Naive thymus-derived CD4-positive, alpha-beta T cell (primary cell): ENCODE measurements at regions of chr1 and their contacts with region 1.

Region 1: DNA sequence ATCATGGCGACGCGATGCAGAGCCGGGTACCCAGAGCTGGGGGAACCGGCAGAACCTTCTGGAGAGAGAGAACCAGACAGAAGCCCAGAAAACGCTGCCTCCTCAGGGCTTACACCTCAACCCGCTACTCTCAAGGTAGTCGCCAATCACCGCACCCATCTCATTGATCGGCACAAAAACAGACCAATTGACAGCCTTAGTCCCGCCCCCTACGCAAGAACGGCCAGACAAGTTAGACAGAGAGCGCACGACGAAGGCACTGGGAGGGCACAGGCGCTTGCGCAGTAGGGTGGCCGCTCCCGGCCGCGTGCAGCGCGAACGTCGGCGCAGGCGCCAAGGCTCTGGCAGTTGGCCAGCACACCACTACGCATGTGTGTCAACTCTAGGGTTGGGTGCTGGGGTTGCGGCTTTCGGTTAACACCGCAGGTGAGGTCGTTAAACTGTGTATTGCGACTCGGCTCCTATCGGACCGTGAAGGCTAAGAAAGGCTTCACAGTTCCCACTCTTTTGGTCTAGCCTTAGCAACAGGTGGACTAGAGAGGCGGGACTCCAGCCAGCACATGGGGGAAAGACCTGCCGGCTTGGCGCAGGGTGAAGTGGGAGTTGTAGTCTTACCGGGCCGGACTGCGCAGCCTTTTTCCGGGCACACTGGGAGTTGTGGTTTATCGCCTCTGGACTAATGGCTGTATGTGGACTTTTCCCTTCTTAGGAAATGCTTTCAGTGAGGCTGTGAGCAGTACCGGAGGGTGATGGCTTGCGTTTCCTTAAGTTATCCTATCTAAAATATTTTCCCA is at the starts of genes CCT3 and TSACC:
- DNase-seq: peak; percentile 99 to 100 (median 100)
- ATAC-seq: peak; percentile 97
- H3K4me3 ChIP-seq: peak within 1 kb of the TSS; percentile 83
- H3K4me3 Mint-ChIP-seq: peak within 1 kb of the TSS; percentile 97 to 99 (median 99)
- H3K27ac ChIP-seq: peak within 1 kb of the TSS; percentile 76
- H3K27ac Mint-ChIP-seq: peak within 1 kb of the TSS; percentile 97 to 99 (median 98)
- H3K4me1 ChIP-seq: peaks cover 11 to 17% of the 10 kb centered on the region in 2 donors
- H3K4me1 Mint-ChIP-seq: peaks cover 16 to 49% (median 40%) of the 10 kb centered on the region in 7 donors
- H3K27me3 ChIP-seq: no peaks in the 10 kb centered on the region
- H3K27me3 Mint-ChIP-seq: peaks cover 0 to 12% (median 0%) of the 10 kb centered on the region in 5 donors
- total RNA-seq, gene CCT3: 78.0 to 282 (median 114) TPM
- total RNA-seq, gene TSACC: 1.1 TPM in 1 of 5 experiments, not detected in the others

Region 2: GRCh38 chr1:155934097-155934935 is 404.1 kb before region 1 on chr1 and contains the start of gene KHDC4:
- CTCF ChIA-PET with region 1: no interaction called
- POLR2A ChIA-PET with region 1: no interaction called
- intact Hi-C with region 1: loop called in 1 of 2 experiments (anchors 5 kb)
- DNase-seq: peak; percentile 79 to 98 (median 97)
- ATAC-seq: peak; percentile 97
- H3K4me3 ChIP-seq: peak within 1 kb of the TSS; percentile 87
- H3K4me3 Mint-ChIP-seq: no peak within 1 kb of the TSS
- H3K27ac ChIP-seq: peak within 1 kb of the TSS; percentile 89
- H3K27ac Mint-ChIP-seq: peak within 1 kb of the TSS in 1 of 9 donors; percentile 22
- H3K4me1 ChIP-seq: peaks cover 40 to 42% of the 10 kb centered on the region in 2 donors
- H3K4me1 Mint-ChIP-seq: peaks cover 15 to 42% (median 37%) of the 10 kb centered on the region in 7 donors
- H3K27me3 ChIP-seq: no peaks in the 10 kb centered on the region
- H3K27me3 Mint-ChIP-seq: no peaks in the 10 kb centered on the region
- total RNA-seq, gene KHDC4: 64.6 to 117 (median 79.8) TPM

Region 3: DNA sequence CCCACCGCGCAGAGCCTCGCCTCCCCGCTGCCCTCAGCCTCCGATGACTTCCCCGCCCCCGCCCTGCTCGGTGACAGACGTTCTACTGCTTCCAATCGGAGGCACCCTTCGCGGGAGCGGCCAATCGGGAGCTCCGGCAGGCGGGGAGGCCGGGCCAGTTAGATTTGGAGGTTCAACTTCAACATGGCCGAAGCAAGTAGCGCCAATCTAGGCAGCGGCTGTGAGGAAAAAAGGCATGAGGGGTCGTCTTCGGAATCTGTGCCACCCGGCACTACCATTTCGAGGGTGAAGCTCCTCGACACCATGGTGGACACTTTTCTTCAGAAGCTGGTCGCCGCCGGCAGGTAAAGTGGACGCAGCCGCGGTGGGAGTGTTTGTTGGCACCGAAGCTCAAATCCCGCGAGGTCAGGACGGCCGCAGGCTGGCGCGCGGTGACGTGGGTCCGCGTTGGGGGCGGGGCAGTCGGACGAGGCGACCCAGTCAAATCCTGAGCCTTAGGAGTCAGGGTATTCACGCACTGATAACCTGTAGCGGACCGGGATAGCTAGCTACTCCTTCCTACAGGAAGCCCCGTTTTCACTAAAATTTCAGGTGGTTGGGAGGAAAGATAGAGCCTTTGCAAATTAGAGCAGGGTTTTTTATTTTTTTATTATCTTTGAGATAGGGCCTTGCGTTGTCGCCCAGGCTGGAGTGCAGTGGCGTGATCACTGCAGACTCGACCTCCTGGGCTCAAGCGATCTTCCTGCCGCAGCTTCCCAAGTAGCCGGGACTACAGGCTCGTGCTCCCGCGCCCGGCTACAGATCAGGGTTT is 125.3 kb before region 1 on chr1 and contains the start of gene PMF1:
- CTCF ChIA-PET with region 1: no interaction called
- POLR2A ChIA-PET with region 1: interaction called, 3 read pairs
- intact Hi-C with region 1: loop called (anchors 1 to 5 kb)
- DNase-seq: peak; percentile 83 to 97 (median 95)
- ATAC-seq: peak; percentile 98
- H3K4me3 ChIP-seq: peak within 1 kb of the TSS; percentile 85
- H3K4me3 Mint-ChIP-seq: peak within 1 kb of the TSS; percentile 90 to 99 (median 96)
- H3K27ac ChIP-seq: peak within 1 kb of the TSS; percentile 94
- H3K27ac Mint-ChIP-seq: peak within 1 kb of the TSS; percentile 98 to 100 (median 99)
- H3K4me1 ChIP-seq: peaks cover 8 to 17% of the 10 kb centered on the region in 2 donors
- H3K4me1 Mint-ChIP-seq: peaks cover 20 to 58% (median 41%) of the 10 kb centered on the region in 7 donors
- H3K27me3 ChIP-seq: no peaks in the 10 kb centered on the region
- H3K27me3 Mint-ChIP-seq: no peaks in the 10 kb centered on the region
- total RNA-seq, gene PMF1: 42.2 to 76.1 (median 58.2) TPM

Region 4: GRCh38 chr1:156259805-156260204 is 78.6 kb before region 1 on chr1:
- CTCF ChIA-PET with region 1: no interaction called
- POLR2A ChIA-PET with region 1: no interaction called
- intact Hi-C with region 1: no loop called
- DNase-seq: no peak
- ATAC-seq: no peak
- H3K4me3 ChIP-seq: no peak overlapping the region
- H3K4me3 Mint-ChIP-seq: no peak overlapping the region
- H3K27ac ChIP-seq: no peak overlapping the region
- H3K27ac Mint-ChIP-seq: peak overlapping the region in 2 of 9 donors; percentile 21 to 26
- H3K4me1 ChIP-seq: no peaks in the 10 kb centered on the region
- H3K4me1 Mint-ChIP-seq: peaks cover 0 to 16% (median 4%) of the 10 kb centered on the region in 7 donors
- H3K27me3 ChIP-seq: no peaks in the 10 kb centered on the region
- H3K27me3 Mint-ChIP-seq: no peaks in the 10 kb centered on the region

Region 5: DNA sequence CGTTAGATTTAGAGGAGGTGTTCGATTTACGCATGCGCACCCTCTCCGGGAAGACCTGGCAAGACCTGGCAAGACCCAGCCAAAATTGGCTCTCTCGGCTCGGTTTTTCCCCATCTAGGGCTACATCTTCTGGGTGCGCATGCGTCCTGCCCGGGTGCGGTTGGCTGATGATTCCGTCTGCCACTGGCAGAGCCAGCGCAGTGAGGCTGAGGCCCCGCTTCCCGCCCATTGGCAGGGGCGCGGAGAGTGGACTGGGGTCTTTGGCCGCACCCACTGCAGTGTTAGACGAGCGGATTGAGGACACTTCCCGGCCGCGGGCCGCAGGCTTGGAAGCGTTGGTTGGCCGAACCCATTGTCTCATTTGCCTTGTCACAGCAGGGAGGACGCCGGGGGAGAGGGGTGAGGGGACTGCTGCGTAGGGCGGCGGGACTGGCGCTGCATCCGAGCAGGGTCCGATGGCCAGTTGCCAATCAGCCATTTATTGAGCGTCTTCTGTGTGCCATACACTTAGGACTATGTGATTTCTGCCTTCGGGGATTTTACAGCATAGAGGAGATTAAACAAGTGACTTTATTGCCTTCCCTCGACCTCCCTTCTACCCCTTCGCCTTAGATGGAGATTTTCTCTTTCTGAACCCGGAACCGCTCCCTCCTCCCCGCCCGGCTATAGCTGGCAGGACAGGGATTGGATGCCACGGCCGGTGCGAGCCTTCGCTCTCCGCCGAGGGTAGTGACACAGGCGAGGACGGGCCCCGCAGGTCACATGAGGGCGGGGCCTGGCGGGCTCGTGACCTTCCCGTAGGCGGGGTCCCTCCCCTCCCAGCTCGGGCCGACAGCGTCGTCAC is 118.5 kb after region 1 on chr1:
- CTCF ChIA-PET with region 1: no interaction called
- POLR2A ChIA-PET with region 1: no interaction called
- intact Hi-C with region 1: loop called in 1 of 2 experiments (anchors 1 kb)
- DNase-seq: peak; percentile 88 to 99 (median 96)
- ATAC-seq: peak; percentile 91
- H3K4me3 ChIP-seq: peak overlapping the region; percentile 87
- H3K4me3 Mint-ChIP-seq: peak overlapping the region; percentile 91 to 97 (median 94)
- H3K27ac ChIP-seq: peak overlapping the region; percentile 97
- H3K27ac Mint-ChIP-seq: peak overlapping the region; percentile 96 to 100 (median 99)
- H3K4me1 ChIP-seq: peaks cover 4 to 6% of the 10 kb centered on the region in 2 donors
- H3K4me1 Mint-ChIP-seq: peaks cover 4 to 23% (median 11%) of the 10 kb centered on the region in 7 donors
- H3K27me3 ChIP-seq: no peaks in the 10 kb centered on the region
- H3K27me3 Mint-ChIP-seq: peaks cover 0 to 10% (median 0%) of the 10 kb centered on the region in 5 donors

Region 6: GRCh38 chr1:156740679-156741612 is 402.6 kb after region 1 on chr1 and contains the start of gene MRPL24:
- CTCF ChIA-PET with region 1: no interaction called
- POLR2A ChIA-PET with region 1: no interaction called
- intact Hi-C with region 1: loop called in 1 of 2 experiments (anchors 2 kb)
- DNase-seq: peak; percentile 84 to 99 (median 98)
- ATAC-seq: peak; percentile 95
- H3K4me3 ChIP-seq: peak within 1 kb of the TSS; percentile 79
- H3K4me3 Mint-ChIP-seq: peak within 1 kb of the TSS; percentile 94 to 99 (median 98)
- H3K27ac ChIP-seq: peak within 1 kb of the TSS; percentile 90
- H3K27ac Mint-ChIP-seq: peak within 1 kb of the TSS; percentile 86 to 99 (median 98)
- H3K4me1 ChIP-seq: peaks cover 17 to 20% of the 10 kb centered on the region in 2 donors
- H3K4me1 Mint-ChIP-seq: peaks cover 23 to 50% (median 40%) of the 10 kb centered on the region in 7 donors
- H3K27me3 ChIP-seq: no peaks in the 10 kb centered on the region
- H3K27me3 Mint-ChIP-seq: no peaks in the 10 kb centered on the region
- total RNA-seq, gene MRPL24: 19.1 to 68.9 (median 47.2) TPM

Region 7: GRCh38 chr1:156813750-156814570 is 475.6 kb after region 1 on chr1:
- CTCF ChIA-PET with region 1: no interaction called
- POLR2A ChIA-PET with region 1: no interaction called
- intact Hi-C with region 1: loop called in 1 of 2 experiments (anchors 2 kb)
- DNase-seq: peak; percentile 54 to 79 (median 70)
- ATAC-seq: peak; percentile 45
- H3K4me3 ChIP-seq: peak overlapping the region; percentile 83
- H3K4me3 Mint-ChIP-seq: peak overlapping the region; percentile 82 to 97 (median 84)
- H3K27ac ChIP-seq: peak overlapping the region; percentile 98
- H3K27ac Mint-ChIP-seq: peak overlapping the region; percentile 90 to 100 (median 99)
- H3K4me1 ChIP-seq: peaks cover 33 to 59% of the 10 kb centered on the region in 2 donors
- H3K4me1 Mint-ChIP-seq: peaks cover 45 to 76% (median 60%) of the 10 kb centered on the region in 7 donors
- H3K27me3 ChIP-seq: no peaks in the 10 kb centered on the region
- H3K27me3 Mint-ChIP-seq: no peaks in the 10 kb centered on the region